SK-N-SH (cell line): ENCODE measurements at regions of chr13 and their contacts with region 1.

Region 1: DNA sequence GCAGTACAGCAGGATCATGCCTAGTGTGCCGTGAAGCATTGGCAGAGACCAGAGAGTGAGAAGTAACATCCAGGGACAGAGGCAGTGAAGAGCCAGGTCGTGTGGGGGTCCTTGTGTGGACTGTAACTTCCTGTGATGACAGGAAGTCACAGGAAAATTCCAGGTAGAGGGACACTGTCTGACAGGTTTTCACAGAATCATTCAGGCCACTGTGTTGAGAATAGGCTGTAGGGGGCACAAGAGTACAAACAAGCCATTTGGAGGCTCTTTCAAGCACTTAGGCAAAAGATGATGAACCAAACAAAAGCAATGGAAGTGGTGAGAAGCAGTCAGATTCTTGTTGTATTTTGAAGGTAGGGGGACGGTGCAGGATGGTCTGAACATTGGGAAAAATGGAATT is 46.4 kb downstream of the N4BP2L1 start:
- DNase-seq: peak; percentile 9
- H3K4me3 ChIP-seq: no peak overlapping the region
- H3K27ac ChIP-seq: no peak overlapping the region
- H3K4me1 ChIP-seq: no peaks in the 10 kb centered on the region
- H3K27me3 ChIP-seq: no peaks in the 10 kb centered on the region
- CTCF ChIP-seq: peak; percentile 36
- EP300 ChIP-seq: no peak
- RAD21 ChIP-seq: peak; percentile 69

Region 2: DNA sequence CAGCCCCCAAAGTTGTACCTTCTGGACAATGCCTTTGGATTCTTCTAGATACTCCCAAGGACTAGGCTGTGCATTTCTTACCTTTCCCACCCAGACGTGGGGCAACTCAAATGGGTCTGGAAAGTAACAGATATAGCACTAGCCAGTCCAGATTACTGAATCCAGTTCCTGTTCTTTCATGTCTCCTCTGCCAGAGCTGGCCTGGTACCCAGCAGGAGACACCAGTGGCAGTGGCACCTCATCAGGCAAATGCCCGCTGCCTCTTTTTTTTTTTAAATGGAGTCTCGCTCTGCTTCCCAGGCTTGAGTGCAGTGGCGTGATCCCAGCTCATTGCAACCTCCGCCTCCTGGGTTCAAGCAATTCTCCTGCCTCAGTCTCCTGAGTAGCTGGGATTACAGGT is 113.9 kb after region 1 on chr13:
- CTCF ChIA-PET with region 1: no interaction called
- POLR2A ChIA-PET with region 1: no interaction called
- DNase-seq: no peak
- H3K4me3 ChIP-seq: no peak overlapping the region
- H3K27ac ChIP-seq: no peak overlapping the region
- H3K4me1 ChIP-seq: no peaks in the 10 kb centered on the region; a peak in 1 of 4 replicates
- H3K27me3 ChIP-seq: no peaks in the 10 kb centered on the region
- CTCF ChIP-seq: no peak
- EP300 ChIP-seq: no peak
- RAD21 ChIP-seq: no peak

Region 3: DNA sequence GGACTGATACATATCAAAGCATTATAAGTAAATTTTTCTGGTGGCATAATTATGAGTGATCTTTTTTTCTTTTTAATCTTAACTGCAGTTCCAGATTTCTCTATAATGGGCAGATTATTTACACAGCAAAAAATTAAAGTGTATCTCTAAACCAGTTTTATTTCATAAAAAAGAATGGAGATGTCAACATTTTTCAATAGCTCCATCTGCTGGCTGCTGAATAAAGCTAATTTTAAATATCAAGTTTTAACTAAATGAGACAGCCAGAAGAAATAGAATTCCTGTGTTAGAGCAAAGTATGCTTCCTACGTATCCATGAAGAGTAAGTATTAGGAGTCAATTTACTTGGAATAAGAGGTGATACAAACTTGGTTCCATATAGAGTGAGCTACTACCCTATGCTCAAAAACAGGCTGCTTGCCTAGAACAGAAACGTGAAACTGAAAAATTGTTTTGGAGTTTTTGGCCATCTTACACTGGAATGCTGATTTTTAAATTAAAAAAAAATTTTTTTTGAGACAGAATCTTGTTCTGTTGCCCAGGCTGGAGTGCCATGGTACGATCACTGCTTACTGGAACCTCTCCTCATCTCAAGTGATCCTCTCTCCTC is 199.7 kb after region 1 on chr13:
- CTCF ChIA-PET with region 1: interaction called, 35 read pairs
- POLR2A ChIA-PET with region 1: no interaction called
- DNase-seq: no peak
- H3K4me3 ChIP-seq: no peak overlapping the region
- H3K27ac ChIP-seq: no peak overlapping the region
- H3K4me1 ChIP-seq: peaks cover 4% of the 10 kb centered on the region in 2 experiments; a peak in 3 of 4 replicates
- H3K27me3 ChIP-seq: no peaks in the 10 kb centered on the region
- CTCF ChIP-seq: peak; percentile 79
- EP300 ChIP-seq: no peak
- RAD21 ChIP-seq: peak; percentile 67